Cardiac septum (tissue), 1 donor: ENCODE measurements at regions of chr14 and their contacts with region 1.

Region 1: DNA sequence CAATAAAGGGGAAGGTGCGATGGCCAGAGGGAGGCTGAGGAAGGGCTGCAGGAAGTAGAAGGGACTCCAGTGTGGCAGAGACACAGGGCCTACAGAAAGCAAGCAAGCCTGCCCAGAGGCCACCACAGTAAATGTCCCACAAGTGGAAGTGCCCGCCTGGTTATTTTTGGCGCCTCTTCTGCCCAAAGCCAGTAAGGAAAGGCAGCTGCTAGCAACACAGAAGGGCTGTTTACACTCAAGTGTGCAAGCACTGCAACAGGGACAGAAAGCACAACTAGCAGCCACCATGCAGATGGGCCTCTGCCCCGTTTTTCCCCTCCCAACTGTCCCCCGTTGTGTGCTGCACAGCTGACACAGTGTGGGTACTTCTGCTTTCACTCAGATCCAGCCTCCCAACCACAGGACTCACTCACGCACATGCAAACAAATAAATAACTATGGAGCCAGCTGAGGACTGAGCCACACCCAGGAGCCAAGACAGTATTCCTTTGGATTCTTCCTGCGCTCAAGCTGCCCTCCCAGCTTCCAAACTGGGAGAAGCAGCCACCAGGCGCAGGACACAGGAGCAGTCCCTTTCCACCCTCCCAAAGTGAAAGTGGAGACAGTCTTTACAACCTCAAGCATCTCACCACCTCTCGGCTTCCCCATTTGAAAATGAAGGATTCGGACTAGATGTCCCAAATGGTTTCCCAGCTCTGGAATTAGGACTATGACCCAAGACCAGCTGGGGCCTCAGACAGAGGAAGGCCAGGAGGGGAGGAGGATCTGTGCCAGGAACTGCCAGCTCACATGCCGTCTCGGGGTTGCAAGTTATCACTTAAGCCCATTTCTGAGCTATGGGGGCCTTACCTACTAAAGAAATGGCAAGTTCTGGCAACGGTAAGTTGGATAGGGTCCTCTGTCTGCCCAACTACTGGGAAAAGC is 40.0 kb upstream of the PNMA1 start:
- DNase-seq: no peak

Region 2: DNA sequence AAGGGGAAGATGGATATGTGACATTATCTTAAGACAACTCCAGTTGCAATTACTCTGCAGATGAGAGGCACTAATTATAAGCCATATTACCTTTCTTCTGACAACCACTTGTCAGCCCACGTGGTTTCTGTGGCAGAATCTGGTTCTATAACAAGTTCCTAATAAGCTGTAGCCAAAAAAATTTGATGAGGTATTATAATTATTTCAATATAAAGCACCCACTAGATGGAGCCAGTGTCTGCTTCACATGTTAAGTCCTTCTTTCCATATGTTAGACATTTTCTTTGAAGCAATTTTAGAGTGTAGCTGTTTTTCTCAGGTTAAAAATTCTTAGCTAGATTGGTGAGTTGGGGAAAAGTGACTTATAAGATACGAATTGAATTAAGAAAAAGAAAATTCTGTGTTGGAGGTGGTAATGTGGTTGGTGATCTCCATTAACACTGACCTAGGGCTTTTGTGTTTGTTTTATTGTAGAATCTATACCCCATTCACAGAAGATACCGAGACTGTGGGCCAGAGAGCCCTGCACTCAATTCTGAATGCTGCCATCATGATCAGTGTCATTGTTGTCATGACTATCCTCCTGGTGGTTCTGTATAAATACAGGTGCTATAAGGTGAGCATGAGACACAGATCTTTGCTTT is 581.0 kb before region 1 on chr14:
- intact Hi-C with region 1: no loop called
- DNase-seq: no peak

Region 3: DNA sequence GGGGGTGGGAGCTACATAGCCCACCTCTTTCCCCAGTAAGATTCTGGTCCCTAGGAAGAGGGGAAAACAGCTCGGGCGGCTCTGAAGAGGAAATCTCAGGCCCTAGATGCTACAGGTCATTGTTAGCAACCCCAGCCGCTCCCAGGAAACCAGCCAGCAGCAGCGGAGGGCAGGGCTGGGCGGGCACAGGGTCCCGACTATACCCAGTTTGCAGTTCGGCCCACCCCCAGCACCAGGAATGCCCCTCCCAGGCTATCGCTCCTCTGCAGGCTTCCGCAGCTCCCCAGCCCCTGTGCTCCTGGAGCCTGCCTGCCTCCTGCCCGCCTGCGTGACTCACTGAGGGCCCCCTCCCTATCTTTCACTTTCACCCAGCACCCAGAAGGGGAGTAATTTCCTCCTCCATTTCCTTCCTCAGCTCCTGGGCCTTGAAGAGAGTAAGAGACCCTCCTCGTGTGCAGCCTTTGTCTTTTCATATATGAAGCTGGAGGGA is 12.8 kb before region 1 on chr14:
- intact Hi-C with region 1: loop called (anchors 2 kb)
- DNase-seq: peak; percentile 92